ENCODE measurements at regions of chr5 and their contacts with region 1.

Region 1: DNA sequence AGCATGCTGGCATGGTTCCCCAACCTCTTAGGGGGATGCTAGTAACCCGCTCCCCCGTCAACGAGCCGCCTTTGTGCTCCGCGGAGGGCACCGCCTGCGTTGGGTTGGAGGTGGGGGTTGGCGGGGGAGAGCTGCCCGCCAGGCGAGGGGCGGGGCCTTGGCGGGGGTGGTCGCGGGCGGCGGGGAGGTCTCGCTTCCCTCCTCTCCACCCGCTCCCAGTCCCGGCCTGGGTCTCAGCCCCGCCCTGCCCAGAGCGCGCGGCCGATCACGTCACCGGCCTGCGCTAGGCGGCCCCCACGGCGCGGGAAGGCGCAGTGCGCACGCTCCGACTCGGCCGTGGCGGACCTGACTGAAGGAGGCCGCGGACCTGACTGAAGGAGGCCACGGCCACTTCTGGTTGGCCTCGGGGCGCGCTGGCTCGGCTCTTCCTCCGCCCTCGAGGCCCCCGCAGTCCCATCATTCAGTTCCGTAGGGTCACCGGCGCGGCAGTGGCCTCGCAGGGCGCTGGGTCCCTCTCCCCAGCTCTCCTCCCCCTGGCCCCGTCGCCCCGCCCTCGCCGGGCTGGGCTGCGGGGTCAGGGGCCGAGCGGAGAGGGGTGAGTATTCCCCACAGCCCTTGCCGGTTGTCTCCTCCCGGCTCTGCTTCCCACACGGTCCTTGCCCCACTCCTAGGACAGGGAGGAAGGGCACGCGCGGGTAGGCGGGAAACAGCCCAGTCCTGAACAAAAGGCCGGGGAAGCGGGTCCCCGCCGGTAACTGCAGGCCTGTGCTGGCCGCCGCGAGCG is at the start of gene ATG10:
- DNase-seq: peak; percentile 86
- H3K4me3 Mint-ChIP-seq: peak within 1 kb of the TSS; percentile 94
- H3K27ac Mint-ChIP-seq: peak within 1 kb of the TSS; percentile 98
- H3K4me1 Mint-ChIP-seq: peaks cover 22% of the 10 kb centered on the region
- H3K27me3 Mint-ChIP-seq: no peaks in the 10 kb centered on the region
- total RNA-seq, gene ATG10: 7.2 to 8.0 TPM

Region 2: GRCh38 chr5:81506900-81507588 is 464.9 kb before region 1 on chr5:
- CTCF ChIA-PET with region 1: interaction called, 3 read pairs
- intact Hi-C with region 1: loop called (anchors 2 kb)
- DNase-seq: peak; percentile 62
- H3K4me3 Mint-ChIP-seq: no peak overlapping the region
- H3K27ac Mint-ChIP-seq: no peak overlapping the region
- H3K4me1 Mint-ChIP-seq: no peaks in the 10 kb centered on the region
- H3K27me3 Mint-ChIP-seq: no peaks in the 10 kb centered on the region

Region 3: GRCh38 chr5:81851481-81852178 is 120.3 kb before region 1 on chr5:
- CTCF ChIA-PET with region 1: no interaction called
- intact Hi-C with region 1: loop called (anchors 1 kb)
- DNase-seq: peak; percentile 91
- H3K4me3 Mint-ChIP-seq: peak overlapping the region; percentile 86
- H3K27ac Mint-ChIP-seq: peak overlapping the region; percentile 92
- H3K4me1 Mint-ChIP-seq: peaks cover 40% of the 10 kb centered on the region
- H3K27me3 Mint-ChIP-seq: no peaks in the 10 kb centered on the region

Region 4: DNA sequence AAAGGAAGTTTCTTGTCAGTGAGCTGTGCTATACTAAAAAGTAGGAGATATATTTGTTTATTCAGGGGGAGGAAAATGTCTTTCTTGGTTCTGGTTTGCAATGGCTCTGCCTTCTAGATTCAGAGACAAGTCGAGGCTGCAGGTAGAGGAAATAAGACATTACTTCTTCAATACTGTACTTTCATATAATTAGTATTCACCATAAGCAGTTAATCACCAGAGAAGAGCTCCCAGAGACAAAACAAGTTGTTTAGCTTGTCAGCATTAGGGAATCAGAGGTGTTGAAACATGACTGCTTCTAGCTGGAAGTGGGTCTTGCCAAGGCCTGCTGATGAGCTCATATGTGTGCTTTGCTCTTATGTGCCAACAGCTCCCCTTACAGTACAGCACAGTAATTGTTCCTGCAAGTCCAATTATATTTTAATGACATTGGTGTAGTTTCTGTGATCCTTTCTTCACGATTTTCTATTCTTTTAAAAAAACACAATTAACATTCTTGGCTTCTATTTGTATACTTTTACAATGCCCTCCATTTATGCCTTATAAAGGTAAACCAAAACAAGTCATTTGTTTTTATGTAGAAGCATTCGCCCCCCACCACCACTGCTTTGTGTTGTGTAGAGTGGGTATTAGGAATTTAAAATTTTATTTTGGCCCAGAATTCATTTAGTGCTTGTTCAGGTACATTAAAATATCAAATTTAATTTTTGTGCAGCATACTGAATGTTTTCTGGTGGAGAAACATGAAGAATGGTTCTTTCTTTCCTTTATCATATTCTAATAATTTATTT is 194.0 kb after region 1 on chr5:
- CTCF ChIA-PET with region 1: no interaction called
- intact Hi-C with region 1: loop called (anchors 1 kb)
- DNase-seq: peak; percentile 56
- H3K4me3 Mint-ChIP-seq: no peak overlapping the region
- H3K27ac Mint-ChIP-seq: no peak overlapping the region
- H3K4me1 Mint-ChIP-seq: peaks cover 15% of the 10 kb centered on the region
- H3K27me3 Mint-ChIP-seq: no peaks in the 10 kb centered on the region

Region 5: DNA sequence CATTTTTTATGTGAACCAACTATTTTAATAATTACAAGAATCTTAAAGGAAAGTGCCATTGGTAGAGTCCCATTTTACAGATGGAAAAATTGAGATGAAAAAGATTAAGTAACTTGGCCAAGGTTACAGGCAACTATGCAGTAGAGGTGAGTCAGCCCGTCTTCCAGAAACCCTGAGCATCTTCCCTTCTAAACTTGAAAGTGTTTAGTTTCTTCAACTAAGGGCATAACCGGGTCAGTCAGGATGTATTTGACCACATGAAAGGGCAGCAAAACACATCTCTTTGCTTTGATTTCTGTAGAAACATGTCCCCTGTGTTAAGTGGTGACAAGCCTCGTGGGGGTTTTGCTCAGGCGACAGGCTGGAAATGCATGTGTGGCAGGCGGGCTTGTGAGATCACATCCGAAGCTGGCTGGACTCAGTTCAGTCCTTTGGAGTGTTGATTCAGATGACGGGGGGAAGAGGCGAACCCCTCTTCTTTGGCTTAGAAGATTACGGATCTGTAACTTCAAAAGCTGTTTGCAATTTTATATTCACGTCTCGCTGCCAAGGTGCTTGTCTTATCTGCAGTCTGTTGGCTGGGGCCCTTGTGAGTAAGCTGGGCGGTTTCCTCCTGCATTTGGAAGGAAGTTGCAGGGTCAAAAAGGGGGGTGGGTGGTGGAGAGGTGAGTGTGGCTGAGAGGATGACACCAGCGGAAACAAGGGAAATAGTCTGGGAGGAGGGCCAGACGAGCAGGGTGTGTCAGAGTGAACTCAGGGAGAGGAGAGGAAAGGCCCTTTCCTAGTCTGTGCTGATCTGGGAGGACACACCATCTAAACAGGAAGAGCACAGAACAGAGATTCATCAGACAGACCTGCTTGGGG is 385.1 kb after region 1 on chr5:
- CTCF ChIA-PET with region 1: no interaction called
- intact Hi-C with region 1: loop called (anchors 5 kb)
- DNase-seq: peak; percentile 91
- H3K4me3 Mint-ChIP-seq: peak overlapping the region; percentile 54
- H3K27ac Mint-ChIP-seq: peak overlapping the region; percentile 97
- H3K4me1 Mint-ChIP-seq: peaks cover 50% of the 10 kb centered on the region
- H3K27me3 Mint-ChIP-seq: no peaks in the 10 kb centered on the region

Measured in activated naive CD4-positive, alpha-beta T cell treated with anti-CD3 and anti-CD28 coated beads for 36 hours (primary cell).